Activated CD8-positive, alpha-beta T cell treated with anti-CD3 and anti-CD28 coated beads, Interleukin-2, amount 10 ng/mL, durations not matched to agents 7 days and 5 days (primary cell): ENCODE measurements at regions of chr4 and their contacts with region 1.

Region 1: GRCh38 chr4:145602129-145602760 is 16.9 kb upstream of the MMAA start:
- DNase-seq: no peak
- ATAC-seq: no peak
- H3K4me3 Mint-ChIP-seq: no peak overlapping the region
- H3K27ac Mint-ChIP-seq: no peak overlapping the region
- H3K4me1 Mint-ChIP-seq: no peaks in the 10 kb centered on the region
- H3K27me3 Mint-ChIP-seq: peaks cover 17% of the 10 kb centered on the region

Region 2: GRCh38 chr4:145618932-145619638 is 16.8 kb after region 1 on chr4 and contains the start of gene MMAA:
- CTCF ChIA-PET with region 1: interaction called, 12 read pairs
- POLR2A ChIA-PET with region 1: no interaction called
- DNase-seq: peak; percentile 96
- ATAC-seq: peak; percentile 98
- H3K4me3 Mint-ChIP-seq: peak within 1 kb of the TSS; percentile 91
- H3K27ac Mint-ChIP-seq: peak within 1 kb of the TSS; percentile 98
- H3K4me1 Mint-ChIP-seq: peaks cover 33% of the 10 kb centered on the region
- H3K27me3 Mint-ChIP-seq: peaks cover under 1% of the 10 kb centered on the region
- total RNA-seq, gene MMAA: 6.8 to 8.2 TPM